ENCODE measurements at regions of chr12 and their contacts with region 1.

Region 1: DNA sequence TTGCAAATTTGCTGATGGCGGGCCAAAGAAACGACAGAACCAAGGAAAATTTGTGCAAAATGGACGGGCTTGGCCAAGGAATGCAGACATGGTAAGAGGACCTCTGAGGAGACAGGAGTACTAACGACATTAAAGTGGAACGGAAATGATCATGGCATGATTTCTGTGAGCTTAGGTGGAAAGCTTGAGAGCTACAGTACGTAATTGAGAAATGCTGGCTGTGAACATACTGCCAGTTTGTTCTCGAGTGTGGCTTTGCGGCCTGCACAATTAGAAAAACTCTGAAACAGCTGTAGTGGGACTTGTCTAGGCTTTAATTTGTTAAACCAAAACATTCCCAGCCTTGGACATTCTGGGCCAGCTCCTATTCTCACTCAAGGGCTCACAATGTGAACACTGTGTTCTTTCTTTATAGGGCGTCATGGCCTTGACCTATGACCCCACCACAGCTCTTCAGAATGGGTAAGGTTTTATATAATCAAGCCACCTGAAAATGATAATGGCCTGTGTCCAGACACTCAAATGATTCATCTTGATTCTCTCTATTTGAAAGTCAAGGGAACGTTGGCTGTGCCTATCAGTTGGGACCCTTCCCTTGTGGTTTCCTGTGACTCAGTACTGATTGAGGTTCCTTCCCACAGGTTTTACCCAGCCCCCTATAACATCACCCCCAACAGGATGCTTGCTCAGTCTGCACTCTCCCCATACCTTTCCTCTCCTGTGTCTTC is 48.5 kb downstream of the BAZ2A start:
- DNase-seq: peak; percentile 82
- H3K4me3 ChIP-seq: no peak overlapping the region
- H3K27ac ChIP-seq: peak overlapping the region; percentile 63
- H3K4me1 ChIP-seq: peaks cover 20% of the 10 kb centered on the region
- H3K27me3 ChIP-seq: no peaks in the 10 kb centered on the region
- CTCF ChIP-seq: no peak
- POLR2A ChIP-seq: peak; percentile 18

Region 2: DNA sequence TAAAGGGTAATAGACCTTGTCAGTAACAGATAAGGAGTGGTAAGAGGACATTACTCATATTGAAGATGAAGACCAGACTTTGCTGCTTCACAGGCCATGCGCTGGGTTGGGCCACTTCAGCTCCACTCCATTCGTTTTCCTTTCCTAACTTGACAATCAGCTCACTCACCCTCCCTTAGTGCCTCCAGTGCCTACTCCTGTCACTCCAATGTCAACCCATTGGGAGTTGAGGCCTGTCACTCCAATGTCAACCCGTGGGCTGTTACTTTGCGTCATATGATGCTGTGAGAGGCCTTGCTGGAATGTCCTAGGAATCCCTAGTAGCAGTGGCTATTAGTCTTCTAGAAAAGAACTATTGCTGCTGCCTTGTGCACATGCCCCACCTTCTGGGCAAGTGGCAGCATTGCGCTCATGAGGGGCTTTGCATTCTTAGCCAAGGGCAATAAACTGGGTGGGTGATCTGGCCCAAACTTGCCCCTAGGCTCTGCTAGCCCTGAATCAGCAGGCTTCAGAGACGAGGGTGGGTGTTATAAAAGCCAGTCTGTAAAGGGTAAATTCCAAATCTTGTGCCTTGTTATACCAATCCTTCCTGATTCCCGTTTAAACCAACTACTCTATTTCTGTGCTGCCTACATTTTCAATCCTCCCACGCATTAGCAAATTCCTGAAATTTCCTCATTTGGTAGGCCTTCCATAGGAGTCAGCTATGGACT is 12.5 kb after region 1 on chr12:
- CTCF ChIA-PET with region 1: interaction called, 15 read pairs
- POLR2A ChIA-PET with region 1: no interaction called
- dilution Hi-C with region 1: no loop called
- intact Hi-C with region 1: no loop called
- DNase-seq: peak; percentile 75
- H3K4me3 ChIP-seq: no peak overlapping the region
- H3K27ac ChIP-seq: peak overlapping the region; percentile 3
- H3K4me1 ChIP-seq: no peaks in the 10 kb centered on the region
- H3K27me3 ChIP-seq: no peaks in the 10 kb centered on the region
- CTCF ChIP-seq: peak; percentile 83 to 87
- POLR2A ChIP-seq: peak; percentile 35

Region 3: DNA sequence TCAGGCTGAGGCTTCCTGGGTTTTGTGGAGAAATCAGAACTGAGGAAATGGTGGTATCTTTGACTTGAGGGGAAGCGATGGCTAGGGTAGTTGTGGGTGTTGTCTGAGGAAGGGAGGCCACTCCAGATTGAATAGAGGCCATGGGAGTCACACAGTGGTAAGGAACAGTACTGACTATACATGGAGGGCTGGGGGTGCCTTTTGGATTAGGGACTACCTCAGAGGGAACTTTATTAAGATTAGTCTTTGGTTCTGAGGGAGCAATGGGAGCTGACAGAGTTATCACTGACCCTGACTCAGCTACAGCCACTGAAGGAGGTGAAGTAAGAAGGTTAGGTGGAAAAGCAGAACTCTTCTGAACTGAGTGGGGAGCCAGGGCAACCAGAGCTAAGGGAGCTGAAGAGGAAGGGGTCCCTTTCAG is 139.2 kb after region 1 on chr12:
- CTCF ChIA-PET with region 1: no interaction called
- POLR2A ChIA-PET with region 1: no interaction called
- dilution Hi-C with region 1: no loop called
- intact Hi-C with region 1: no loop called
- DNase-seq: no peak
- H3K4me3 ChIP-seq: no peak overlapping the region
- H3K27ac ChIP-seq: no peak overlapping the region
- H3K4me1 ChIP-seq: peaks cover 33% of the 10 kb centered on the region
- H3K27me3 ChIP-seq: no peaks in the 10 kb centered on the region
- CTCF ChIP-seq: no peak
- POLR2A ChIP-seq: no peak